Dendritic cell treated with granulocyte-macrophage colony-stimulating factor and Interleukin-4, amounts not matched to agents 40 ng/mL and 50 ng/mL, for 4 days (primary cell): ENCODE measurements at regions of chr11 and their contacts with region 1.

Region 1: GRCh38 chr11:69443138-69443967 is 38.1 kb upstream of the LINC01488 start:
- H3K4me3 Mint-ChIP-seq: peak overlapping the region; percentile 57
- H3K27ac Mint-ChIP-seq: peak overlapping the region; percentile 87
- H3K4me1 Mint-ChIP-seq: peaks cover 63% of the 10 kb centered on the region
- H3K27me3 Mint-ChIP-seq: peaks cover 68% of the 10 kb centered on the region

Region 2: GRCh38 chr11:69540118-69540502 is 96.8 kb after region 1 on chr11:
- intact Hi-C with region 1: loop called (anchors 10 kb)
- H3K4me3 Mint-ChIP-seq: no peak overlapping the region
- H3K27ac Mint-ChIP-seq: peak overlapping the region; percentile 93
- H3K4me1 Mint-ChIP-seq: peaks cover 45% of the 10 kb centered on the region
- H3K27me3 Mint-ChIP-seq: peaks cover 12% of the 10 kb centered on the region